Naive thymus-derived CD4-positive, alpha-beta T cell (primary cell): ENCODE measurements at regions of chr5 and their contacts with region 1.

Region 1: GRCh38 chr5:119315516-119315949 is 40.3 kb upstream of the TNFAIP8 start:
- DNase-seq: peak in 7 of 9 donors; percentile 60 to 78 (median 67)
- ATAC-seq: peak; percentile 93
- H3K4me3 ChIP-seq: peak overlapping the region; percentile 25
- H3K4me3 Mint-ChIP-seq: peak overlapping the region; percentile 27 to 90 (median 60)
- H3K27ac ChIP-seq: peak overlapping the region; percentile 69
- H3K27ac Mint-ChIP-seq: peak overlapping the region; percentile 73 to 98 (median 93)
- H3K4me1 ChIP-seq: peaks cover 72 to 93% of the 10 kb centered on the region in 2 donors
- H3K4me1 Mint-ChIP-seq: peaks cover 68 to 96% (median 92%) of the 10 kb centered on the region in 7 donors
- H3K27me3 ChIP-seq: no peaks in the 10 kb centered on the region
- H3K27me3 Mint-ChIP-seq: no peaks in the 10 kb centered on the region

Region 2: DNA sequence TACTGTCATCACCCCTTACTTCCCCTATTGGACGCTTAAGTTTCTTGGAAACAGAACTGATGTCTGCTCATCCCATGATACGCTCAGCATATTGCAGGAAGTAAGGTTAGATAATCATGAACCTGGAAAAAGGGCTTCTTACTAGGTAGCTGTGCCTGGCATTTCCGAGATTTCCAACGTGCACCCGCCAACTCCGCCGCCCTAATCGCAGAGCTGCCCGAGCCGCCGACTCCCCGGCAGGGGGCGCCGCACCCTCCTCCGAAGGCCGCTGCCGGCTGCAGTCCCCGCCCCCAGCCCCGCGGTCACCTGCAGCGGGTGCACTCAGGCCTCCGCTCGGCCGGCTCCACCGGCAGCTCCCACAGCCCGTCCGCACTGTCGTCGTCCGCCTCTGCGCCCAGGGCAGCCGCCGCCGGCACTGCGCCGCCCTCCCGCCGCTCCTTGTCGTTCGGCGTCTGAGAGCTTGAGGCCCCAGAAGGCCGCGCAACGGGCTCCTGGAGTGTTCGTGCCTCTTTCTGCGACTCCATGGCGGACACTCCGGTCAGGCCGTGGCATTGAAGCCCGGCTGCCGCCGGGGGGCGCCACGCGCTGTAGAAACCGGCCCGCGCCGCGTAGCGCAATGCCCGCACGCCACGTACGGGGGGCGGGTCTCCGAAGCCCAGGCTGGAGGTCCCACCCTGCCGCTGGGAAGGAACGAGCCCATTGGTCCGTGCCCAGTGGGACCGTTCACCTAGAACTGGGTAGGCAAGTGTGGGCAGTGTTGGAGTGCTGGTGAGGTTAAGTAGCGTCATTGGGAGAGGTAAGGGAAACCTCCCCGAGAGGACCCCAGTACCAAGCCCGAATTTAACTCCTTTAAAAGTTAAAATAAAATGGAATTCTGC is 327.3 kb before region 1 on chr5 and contains the start of gene DTWD2:
- CTCF ChIA-PET with region 1: interaction called, 8 read pairs
- POLR2A ChIA-PET with region 1: no interaction called
- intact Hi-C with region 1: loop called (anchors 1 kb)
- DNase-seq: peak; percentile 84 to 98 (median 95)
- ATAC-seq: peak; percentile 95
- H3K4me3 ChIP-seq: peak within 1 kb of the TSS; percentile 59
- H3K4me3 Mint-ChIP-seq: peak within 1 kb of the TSS; percentile 78 to 87 (median 84)
- H3K27ac ChIP-seq: peak within 1 kb of the TSS; percentile 74
- H3K27ac Mint-ChIP-seq: peak within 1 kb of the TSS in 8 of 9 donors; percentile 19 to 84 (median 79)
- H3K4me1 ChIP-seq: peaks cover 6 to 8% of the 10 kb centered on the region in 2 donors
- H3K4me1 Mint-ChIP-seq: peaks cover 14 to 39% (median 28%) of the 10 kb centered on the region in 7 donors
- H3K27me3 ChIP-seq: no peaks in the 10 kb centered on the region
- H3K27me3 Mint-ChIP-seq: peaks cover 0 to 2% (median 0%) of the 10 kb centered on the region in 5 donors
- total RNA-seq, gene DTWD2: 2.6 to 5.8 (median 3.4) TPM

Region 3: GRCh38 chr5:119267958-119268386 is 47.6 kb before region 1 on chr5:
- CTCF ChIA-PET with region 1: interaction called, 16 read pairs
- POLR2A ChIA-PET with region 1: interaction called, 466 read pairs
- intact Hi-C with region 1: no loop called
- DNase-seq: peak; percentile 66 to 91 (median 75)
- ATAC-seq: peak; percentile 89
- H3K4me3 ChIP-seq: peak overlapping the region; percentile 96
- H3K4me3 Mint-ChIP-seq: peak overlapping the region; percentile 95 to 100 (median 98)
- H3K27ac ChIP-seq: peak overlapping the region; percentile 85
- H3K27ac Mint-ChIP-seq: peak overlapping the region; percentile 87 to 99 (median 96)
- H3K4me1 ChIP-seq: peaks cover 24 to 32% of the 10 kb centered on the region in 2 donors
- H3K4me1 Mint-ChIP-seq: peaks cover 47 to 74% (median 72%) of the 10 kb centered on the region in 7 donors
- H3K27me3 ChIP-seq: no peaks in the 10 kb centered on the region
- H3K27me3 Mint-ChIP-seq: no peaks in the 10 kb centered on the region

Region 4: GRCh38 chr5:119302916-119303897 is 12.3 kb before region 1 on chr5:
- CTCF ChIA-PET with region 1: interaction called, 19 read pairs
- POLR2A ChIA-PET with region 1: interaction called, 23 read pairs
- intact Hi-C with region 1: loop called in 1 of 2 experiments (anchors 1 kb)
- DNase-seq: peak in 3 of 9 donors; percentile 36 to 66 (median 51)
- ATAC-seq: peak; percentile 78
- H3K4me3 ChIP-seq: peak overlapping the region; percentile 24
- H3K4me3 Mint-ChIP-seq: peak overlapping the region; percentile 63 to 93 (median 76)
- H3K27ac ChIP-seq: peak overlapping the region; percentile 74
- H3K27ac Mint-ChIP-seq: peak overlapping the region; percentile 85 to 100 (median 98)
- H3K4me1 ChIP-seq: peaks cover 81 to 82% of the 10 kb centered on the region in 2 donors
- H3K4me1 Mint-ChIP-seq: peaks cover 57 to 97% (median 94%) of the 10 kb centered on the region in 7 donors
- H3K27me3 ChIP-seq: no peaks in the 10 kb centered on the region
- H3K27me3 Mint-ChIP-seq: no peaks in the 10 kb centered on the region

Region 5: GRCh38 chr5:119355685-119356611 is 40.4 kb after region 1 on chr5 and contains the start of gene TNFAIP8:
- CTCF ChIA-PET with region 1: interaction called, 10 read pairs
- POLR2A ChIA-PET with region 1: interaction called, 7 read pairs
- intact Hi-C with region 1: loop called (anchors 1 to 5 kb)
- DNase-seq: peak in 2 of 9 donors; percentile 69 to 85
- ATAC-seq: peak; percentile 61
- H3K4me3 ChIP-seq: peak within 1 kb of the TSS; percentile 53
- H3K4me3 Mint-ChIP-seq: peak within 1 kb of the TSS; percentile 81 to 98 (median 90)
- H3K27ac ChIP-seq: peak within 1 kb of the TSS; percentile 55
- H3K27ac Mint-ChIP-seq: peak within 1 kb of the TSS; percentile 86 to 97 (median 91)
- H3K4me1 ChIP-seq: peaks cover 78 to 88% of the 10 kb centered on the region in 2 donors
- H3K4me1 Mint-ChIP-seq: peaks cover 66 to 100% (median 97%) of the 10 kb centered on the region in 7 donors
- H3K27me3 ChIP-seq: no peaks in the 10 kb centered on the region
- H3K27me3 Mint-ChIP-seq: no peaks in the 10 kb centered on the region
- total RNA-seq, gene TNFAIP8: 102 to 162 (median 130) TPM

Region 6: DNA sequence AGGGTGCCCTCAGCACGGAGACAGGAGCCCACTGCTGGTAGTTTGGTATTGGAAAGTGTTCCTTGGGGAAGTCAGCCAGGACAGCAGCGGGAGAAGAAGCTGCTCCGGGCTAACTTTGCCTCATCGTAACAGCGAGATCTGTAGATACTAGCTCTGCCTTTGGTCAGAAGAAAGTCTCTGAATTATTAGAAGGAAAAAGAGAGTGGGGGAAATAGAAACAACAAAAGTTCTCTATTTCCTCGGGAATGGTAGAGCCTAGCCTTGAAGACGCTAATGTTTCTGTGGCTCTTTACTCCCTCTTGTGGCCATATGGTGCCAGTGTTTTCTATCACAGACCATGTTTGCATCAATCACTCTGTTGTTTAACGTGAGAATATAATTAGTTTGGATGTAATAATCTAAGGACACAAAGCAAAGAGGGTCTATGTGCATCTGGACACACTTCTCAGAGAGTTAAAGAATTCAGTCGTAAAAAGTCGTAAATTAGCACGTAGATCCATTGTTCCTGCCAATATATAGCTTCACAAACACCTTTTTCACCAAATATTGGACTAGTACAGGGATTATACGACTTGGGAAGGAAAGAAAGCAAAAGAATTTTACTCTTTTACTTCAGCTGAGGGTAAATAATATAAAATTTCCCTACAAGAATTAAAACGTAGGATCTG is 96.5 kb after region 1 on chr5:
- CTCF ChIA-PET with region 1: interaction called, 47 read pairs
- POLR2A ChIA-PET with region 1: interaction called, 9 read pairs
- intact Hi-C with region 1: loop called (anchors 1 kb)
- DNase-seq: peak in 7 of 9 donors; percentile 54 to 73 (median 68)
- ATAC-seq: peak; percentile 92
- H3K4me3 ChIP-seq: peak overlapping the region; percentile 59
- H3K4me3 Mint-ChIP-seq: peak overlapping the region; percentile 88 to 93 (median 91)
- H3K27ac ChIP-seq: peak overlapping the region; percentile 15
- H3K27ac Mint-ChIP-seq: peak overlapping the region; percentile 55 to 86 (median 76)
- H3K4me1 ChIP-seq: peaks cover 0 to 5% of the 10 kb centered on the region in 2 donors
- H3K4me1 Mint-ChIP-seq: peaks cover 11 to 32% (median 20%) of the 10 kb centered on the region in 7 donors
- H3K27me3 ChIP-seq: no peaks in the 10 kb centered on the region
- H3K27me3 Mint-ChIP-seq: peaks cover 0 to 5% (median 0%) of the 10 kb centered on the region in 5 donors